ENCODE measurements at regions of chr21 and their contacts with region 1.

Region 1: GRCh38 chr21:33936301-33937038 is 20.9 kb upstream of the ATP5PO start:
- DNase-seq: no peak
- ATAC-seq: no peak
- H3K4me3 ChIP-seq: no peak overlapping the region
- H3K27ac ChIP-seq: no peak overlapping the region
- H3K4me1 ChIP-seq: peaks cover 10% of the 10 kb centered on the region
- H3K27me3 ChIP-seq: no peaks in the 10 kb centered on the region
- CTCF ChIP-seq: no peak
- POLR2A ChIP-seq: no peak
- RAD21 ChIP-seq: no peak

Region 2: DNA sequence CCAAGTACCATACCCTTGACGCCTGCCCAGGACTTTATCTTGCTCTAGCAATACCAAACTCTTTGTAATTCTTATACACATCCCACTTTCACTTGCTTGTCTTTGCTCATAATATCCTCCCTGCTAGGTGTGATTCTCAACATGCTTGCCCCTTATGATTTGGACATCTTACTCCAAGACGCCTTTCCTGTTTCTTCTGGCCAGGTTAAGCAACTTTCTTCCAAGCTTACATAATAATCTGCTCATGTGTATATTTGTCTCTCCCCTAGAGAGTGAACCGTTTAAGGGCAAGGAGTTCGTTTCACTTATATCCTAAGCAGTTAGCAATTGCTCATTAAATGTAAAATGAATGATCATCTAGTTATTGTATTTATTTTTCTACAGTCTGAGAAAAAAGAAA is 316.7 kb before region 1 on chr21:
- CTCF ChIA-PET with region 1: no interaction called
- POLR2A ChIA-PET with region 1: no interaction called
- dilution Hi-C with region 1: no loop called
- in situ Hi-C with region 1: no loop called
- intact Hi-C with region 1: no loop called
- DNase-seq: no peak
- ATAC-seq: no peak
- H3K4me3 ChIP-seq: no peak overlapping the region
- H3K27ac ChIP-seq: no peak overlapping the region
- H3K4me1 ChIP-seq: no peaks in the 10 kb centered on the region
- H3K27me3 ChIP-seq: no peaks in the 10 kb centered on the region
- CTCF ChIP-seq: no peak
- POLR2A ChIP-seq: no peak
- RAD21 ChIP-seq: no peak

Region 3: DNA sequence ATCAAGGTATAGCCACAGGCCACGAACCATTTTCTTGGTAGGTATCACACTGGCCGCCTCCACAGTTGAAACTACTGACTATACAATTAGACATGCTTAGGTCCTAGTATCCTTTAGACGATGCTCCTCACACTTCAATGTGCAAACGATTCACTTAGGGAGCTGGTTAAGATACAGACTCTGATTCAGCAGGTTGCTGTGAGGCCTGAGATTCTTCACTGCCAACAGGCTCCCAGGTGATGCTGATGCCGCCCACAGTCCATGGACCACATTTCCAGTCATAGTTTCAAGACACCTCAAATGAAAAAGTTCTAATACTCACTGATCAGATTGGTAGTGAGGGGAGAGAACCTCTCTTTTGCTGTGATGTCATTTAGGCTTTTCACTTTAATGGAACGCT is 27.7 kb before region 1 on chr21:
- CTCF ChIA-PET with region 1: no interaction called
- POLR2A ChIA-PET with region 1: no interaction called
- dilution Hi-C with region 1: no loop called
- in situ Hi-C with region 1: no loop called
- intact Hi-C with region 1: no loop called
- DNase-seq: no peak
- ATAC-seq: no peak
- H3K4me3 ChIP-seq: no peak overlapping the region
- H3K27ac ChIP-seq: no peak overlapping the region
- H3K4me1 ChIP-seq: no peaks in the 10 kb centered on the region
- H3K27me3 ChIP-seq: no peaks in the 10 kb centered on the region
- CTCF ChIP-seq: no peak
- POLR2A ChIP-seq: no peak
- RAD21 ChIP-seq: no peak

Region 4: DNA sequence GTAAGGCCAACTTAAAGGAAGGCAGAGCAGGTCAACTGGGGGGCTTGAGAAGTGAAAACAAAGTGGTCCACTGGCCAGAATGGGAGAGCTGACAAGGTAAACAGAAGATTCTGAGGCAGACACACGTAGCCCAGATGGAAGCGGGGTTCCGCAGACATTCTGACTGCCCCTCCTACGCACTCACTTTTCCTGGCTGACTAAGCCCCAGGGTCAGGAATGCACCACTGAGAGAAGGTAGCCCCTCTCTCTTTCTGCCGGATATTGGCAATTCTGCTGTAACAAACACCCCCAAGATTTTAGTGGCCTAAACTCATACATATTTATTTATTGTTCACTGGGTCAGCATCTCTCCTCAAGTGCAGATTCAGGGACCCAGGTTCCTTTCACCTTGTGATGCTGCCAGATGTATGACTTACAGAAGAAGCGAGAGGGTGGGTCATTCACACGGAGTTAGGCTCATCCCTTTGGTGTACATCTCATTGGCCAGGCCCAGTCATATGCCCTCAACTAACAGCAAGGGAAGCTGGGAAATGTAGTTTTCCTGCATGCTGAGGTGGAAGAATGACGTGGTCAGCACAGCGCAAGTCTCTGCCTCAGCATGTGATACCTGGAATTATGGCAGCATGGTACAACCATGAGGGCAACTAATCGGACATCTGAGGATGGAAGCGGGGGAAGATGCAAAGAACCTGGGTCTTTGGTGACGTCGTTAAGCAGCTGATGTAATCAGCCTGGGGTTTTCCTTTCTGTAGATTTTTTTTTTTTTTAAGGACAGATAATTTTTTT is 93.5 kb after region 1 on chr21:
- CTCF ChIA-PET with region 1: no interaction called
- POLR2A ChIA-PET with region 1: no interaction called
- dilution Hi-C with region 1: no loop called
- in situ Hi-C with region 1: no loop called
- intact Hi-C with region 1: no loop called
- DNase-seq: peak; percentile 82
- ATAC-seq: peak; percentile 98
- H3K4me3 ChIP-seq: peak overlapping the region; percentile 6; the same call in 1 of the 2 replicates
- H3K27ac ChIP-seq: no peak overlapping the region
- H3K4me1 ChIP-seq: no peaks in the 10 kb centered on the region
- H3K27me3 ChIP-seq: no peaks in the 10 kb centered on the region
- CTCF ChIP-seq: no peak
- POLR2A ChIP-seq: no peak
- RAD21 ChIP-seq: no peak

Region 5: GRCh38 chr21:34345091-34345871 is 408.8 kb after region 1 on chr21:
- CTCF ChIA-PET with region 1: no interaction called
- POLR2A ChIA-PET with region 1: no interaction called
- dilution Hi-C with region 1: no loop called
- in situ Hi-C with region 1: no loop called
- intact Hi-C with region 1: loop called (anchors 5 kb)
- DNase-seq: peak; percentile 60
- ATAC-seq: peak; percentile 52
- H3K4me3 ChIP-seq: no peak overlapping the region
- H3K27ac ChIP-seq: peak overlapping the region; percentile 59
- H3K4me1 ChIP-seq: peaks cover 22% of the 10 kb centered on the region
- H3K27me3 ChIP-seq: peaks cover 2% of the 10 kb centered on the region; the same call in 1 of the 2 replicates
- CTCF ChIP-seq: no peak
- POLR2A ChIP-seq: no peak
- RAD21 ChIP-seq: no peak

Measured in IMR-90 (cell line).